Activated B cell treated with CpG ODN at 0.5 μM for 24 hours (primary cell): ENCODE measurements at regions of chr12 and their contacts with region 1.

Region 1: DNA sequence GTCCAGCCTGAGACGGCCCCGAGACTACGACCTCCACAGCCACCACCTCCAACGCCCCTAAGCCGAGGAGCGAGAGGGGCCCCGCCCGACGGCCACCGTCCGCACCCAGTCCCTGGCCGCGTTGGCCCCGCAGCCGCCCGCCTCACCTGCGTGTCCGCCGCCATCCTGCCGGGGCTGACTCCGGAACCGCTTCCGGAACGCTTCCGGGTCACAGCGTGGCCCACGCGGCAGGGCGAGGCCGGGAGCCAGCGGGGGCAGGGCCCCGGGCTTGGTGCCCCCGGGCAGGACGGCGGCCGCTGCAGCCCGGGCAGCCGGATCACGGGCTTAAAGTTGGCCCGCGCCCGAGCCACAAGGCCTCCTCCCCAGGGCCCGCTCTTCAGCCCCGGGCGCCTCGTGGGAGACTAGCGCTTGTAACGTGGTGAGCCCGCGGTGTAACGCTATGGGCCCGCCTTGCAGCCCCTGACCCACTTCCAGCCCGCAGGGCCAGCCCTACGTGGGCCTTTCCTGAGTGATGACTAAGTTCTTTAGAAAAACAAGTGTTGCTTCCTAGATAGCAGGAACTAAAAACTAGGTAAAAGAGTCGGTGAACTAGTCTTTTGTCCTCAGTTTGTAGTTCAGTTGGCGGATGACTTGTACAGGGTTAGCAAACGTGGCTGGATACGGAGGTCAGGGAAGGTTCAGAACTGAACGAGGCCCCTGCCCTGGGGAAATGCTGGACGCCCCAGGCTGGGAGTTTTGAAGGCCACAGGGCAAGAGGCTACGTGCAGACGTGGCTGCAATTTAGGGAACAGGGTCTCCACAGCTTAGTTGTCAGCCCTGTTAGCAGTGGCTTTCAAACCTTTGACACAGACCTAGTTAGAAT is at the start of gene GCN1:
- DNase-seq: peak; percentile 97
- ATAC-seq: peak; percentile 94
- H3K4me3 Mint-ChIP-seq: peak within 1 kb of the TSS; percentile 83
- H3K27ac Mint-ChIP-seq: peak within 1 kb of the TSS; percentile 86
- H3K4me1 Mint-ChIP-seq: peaks cover 51% of the 10 kb centered on the region
- H3K27me3 Mint-ChIP-seq: no peaks in the 10 kb centered on the region
- CTCF ChIP-seq: no peak
- total RNA-seq, gene GCN1: 116 and 155 TPM in 2 replicates

Region 2: DNA sequence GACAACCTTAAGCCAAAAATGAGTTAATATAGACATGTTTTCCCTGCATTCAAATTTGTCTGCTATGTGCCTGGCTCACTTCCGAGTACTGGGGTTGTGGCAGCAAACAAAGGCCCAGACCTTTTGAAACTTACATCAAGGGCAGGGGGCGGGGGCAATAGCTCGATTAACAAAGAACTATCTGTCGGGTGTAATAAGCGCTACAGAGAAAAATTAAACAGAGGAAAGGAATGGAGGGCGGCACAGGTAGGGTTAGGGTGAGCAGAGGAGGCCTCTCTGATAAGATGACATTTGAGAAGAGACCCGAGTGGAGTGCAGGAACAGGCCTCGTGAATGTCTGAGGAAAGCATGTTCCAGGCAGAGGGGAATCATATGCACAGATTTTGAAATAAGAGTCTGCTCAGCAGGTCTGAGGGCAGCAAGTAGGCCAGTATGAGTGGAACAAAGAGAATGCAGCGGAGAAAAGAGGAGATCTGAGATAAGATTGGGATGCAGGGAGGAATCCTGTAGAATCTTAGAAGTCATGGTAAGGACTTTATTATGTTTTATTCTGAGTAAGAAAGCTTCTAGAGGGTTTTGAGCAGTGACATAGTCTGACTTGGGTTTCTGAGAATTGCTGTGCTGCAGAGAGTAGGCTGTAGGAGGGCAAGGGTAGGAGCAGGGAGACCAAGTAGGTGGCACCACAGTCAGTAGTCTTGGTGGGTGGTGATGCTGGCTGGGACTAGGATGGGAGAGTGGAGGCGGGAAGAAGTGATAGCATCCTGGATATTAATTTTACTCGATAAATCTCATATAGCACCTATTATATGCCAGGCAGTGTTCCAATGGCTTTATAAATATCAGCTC is 153.2 kb before region 1 on chr12:
- CTCF ChIA-PET with region 1: no interaction called
- POLR2A ChIA-PET with region 1: no interaction called
- intact Hi-C with region 1: no loop called
- DNase-seq: no peak
- ATAC-seq: no peak
- H3K4me3 Mint-ChIP-seq: no peak overlapping the region
- H3K27ac Mint-ChIP-seq: no peak overlapping the region
- H3K4me1 Mint-ChIP-seq: no peaks in the 10 kb centered on the region
- H3K27me3 Mint-ChIP-seq: no peaks in the 10 kb centered on the region
- CTCF ChIP-seq: no peak

Region 3: DNA sequence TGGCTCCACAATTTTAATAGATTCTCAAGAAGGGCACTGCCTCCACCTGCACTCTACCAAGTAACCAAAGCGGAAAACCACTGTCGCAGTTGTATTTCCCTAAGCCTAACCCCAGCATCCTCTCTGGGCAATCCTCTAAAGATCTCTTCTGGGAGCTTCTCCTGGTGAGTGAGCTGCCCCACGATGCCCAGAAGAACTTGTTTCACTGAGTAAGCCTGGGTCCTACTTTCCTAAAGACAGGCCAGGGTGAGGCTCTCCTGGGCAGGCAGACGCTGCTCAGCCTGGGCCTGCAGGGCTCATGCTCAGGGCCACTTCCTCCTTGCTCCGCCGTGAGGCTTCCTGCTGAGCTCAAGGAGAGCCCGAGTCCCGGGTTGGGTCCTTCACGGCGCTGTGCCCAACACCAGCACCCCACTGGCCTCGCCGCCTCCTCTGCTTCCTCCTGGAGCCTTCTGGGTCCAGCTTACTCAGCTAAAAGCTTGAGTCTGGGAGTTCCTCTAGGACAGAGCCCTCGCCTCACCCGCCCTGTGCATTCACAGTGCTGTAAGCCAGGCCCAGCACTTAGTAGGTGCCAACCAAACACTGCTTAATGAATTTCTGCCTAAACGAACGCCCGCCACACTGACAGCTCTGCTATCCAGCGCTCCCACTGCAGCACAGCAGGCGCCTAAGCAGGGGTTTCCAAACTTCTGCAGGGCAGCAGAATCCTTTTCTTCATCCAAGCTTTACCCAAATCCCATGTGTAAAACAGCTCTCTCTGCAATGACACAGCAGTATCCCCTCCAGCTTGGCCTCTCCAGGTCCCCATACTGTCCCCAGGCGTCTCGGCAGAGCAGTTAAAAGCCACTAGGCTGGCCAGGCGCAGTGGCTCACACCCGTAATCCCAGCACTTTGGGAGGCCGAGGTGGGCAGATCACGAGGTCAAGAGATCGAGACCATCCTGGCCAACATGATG is 83.9 kb before region 1 on chr12:
- CTCF ChIA-PET with region 1: no interaction called
- POLR2A ChIA-PET with region 1: interaction called, 91 read pairs
- intact Hi-C with region 1: no loop called
- DNase-seq: peak; percentile 59
- ATAC-seq: peak; percentile 89
- H3K4me3 Mint-ChIP-seq: peak overlapping the region; percentile 66
- H3K27ac Mint-ChIP-seq: peak overlapping the region; percentile 87
- H3K4me1 Mint-ChIP-seq: peaks cover 70% of the 10 kb centered on the region
- H3K27me3 Mint-ChIP-seq: no peaks in the 10 kb centered on the region
- CTCF ChIP-seq: no peak

Region 4: DNA sequence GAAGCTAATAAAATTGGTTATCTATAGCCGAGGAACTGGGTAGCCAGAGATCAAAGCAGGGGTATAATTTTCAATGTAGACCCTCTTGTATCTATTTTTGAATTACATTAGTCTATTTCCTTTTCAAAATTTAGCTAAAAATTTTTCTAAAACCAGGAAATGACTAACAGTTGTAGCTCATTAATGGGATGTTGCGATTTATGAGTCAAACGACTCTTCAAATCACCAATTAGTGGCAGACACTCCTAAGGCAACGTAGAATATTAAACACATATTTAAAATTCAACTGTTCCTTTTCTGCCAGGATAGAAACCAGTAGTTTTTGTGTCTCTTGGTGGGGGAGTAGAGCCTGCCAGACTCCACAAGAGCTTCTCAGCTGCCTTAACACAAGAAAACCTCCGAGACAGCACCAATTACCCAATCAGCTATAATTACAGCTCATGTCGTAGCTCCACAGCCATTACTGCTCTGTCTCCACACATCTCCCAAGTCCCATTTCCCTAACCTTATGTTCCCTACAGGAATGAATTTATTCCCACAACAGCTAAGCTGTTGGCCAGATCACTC is 27.2 kb before region 1 on chr12:
- CTCF ChIA-PET with region 1: no interaction called
- POLR2A ChIA-PET with region 1: interaction called, 21 read pairs
- intact Hi-C with region 1: no loop called
- DNase-seq: no peak
- ATAC-seq: no peak
- H3K4me3 Mint-ChIP-seq: no peak overlapping the region
- H3K27ac Mint-ChIP-seq: no peak overlapping the region
- H3K4me1 Mint-ChIP-seq: peaks cover 3% of the 10 kb centered on the region
- H3K27me3 Mint-ChIP-seq: no peaks in the 10 kb centered on the region
- CTCF ChIP-seq: no peak